ENCODE measurements at regions of chr3 and their contacts with region 1.

Region 1: DNA sequence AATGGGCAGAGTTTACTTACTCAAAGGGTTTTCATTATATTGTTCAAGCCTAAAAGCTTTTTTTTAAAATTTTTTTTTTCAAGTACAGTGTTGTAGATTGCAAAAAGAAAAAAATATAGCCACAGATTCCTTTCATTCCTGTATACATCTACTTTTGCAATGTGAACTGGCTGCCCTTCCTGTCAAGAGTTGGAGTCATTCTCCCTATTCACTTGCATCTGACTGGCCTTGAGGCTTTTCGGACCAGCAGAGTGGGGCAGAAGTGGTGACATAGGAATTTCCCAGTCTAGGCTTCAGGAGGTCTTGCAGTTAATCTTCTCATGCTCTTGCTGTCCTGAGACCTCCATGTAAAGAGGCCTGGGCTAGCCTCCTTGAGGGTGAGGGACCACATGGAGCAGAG is 218.3 kb upstream of the CFAP20DC start:
- DNase-seq: no peak
- ATAC-seq: no peak
- H3K4me3 ChIP-seq: no peak overlapping the region
- H3K27ac ChIP-seq: no peak overlapping the region
- H3K4me1 ChIP-seq: peaks cover 11% of the 10 kb centered on the region; the same call in 1 of the 2 replicates
- H3K27me3 ChIP-seq: no peaks in the 10 kb centered on the region
- CTCF ChIP-seq: no peak

Region 2: GRCh38 chr3:59240666-59241255 is 27.4 kb before region 1 on chr3:
- CTCF ChIA-PET with region 1: interaction called, 11 read pairs
- POLR2A ChIA-PET with region 1: interaction called, 5 read pairs
- intact Hi-C with region 1: no loop called
- DNase-seq: peak; percentile 69
- ATAC-seq: peak; percentile 65
- H3K4me3 ChIP-seq: no peak overlapping the region
- H3K27ac ChIP-seq: peak overlapping the region; percentile 72
- H3K4me1 ChIP-seq: peaks cover 58% of the 10 kb centered on the region
- H3K27me3 ChIP-seq: no peaks in the 10 kb centered on the region
- CTCF ChIP-seq: no peak